Mucosa of descending colon (tissue), 3 donors: ENCODE measurements at regions of chr7 and their contacts with region 1.

Region 1: DNA sequence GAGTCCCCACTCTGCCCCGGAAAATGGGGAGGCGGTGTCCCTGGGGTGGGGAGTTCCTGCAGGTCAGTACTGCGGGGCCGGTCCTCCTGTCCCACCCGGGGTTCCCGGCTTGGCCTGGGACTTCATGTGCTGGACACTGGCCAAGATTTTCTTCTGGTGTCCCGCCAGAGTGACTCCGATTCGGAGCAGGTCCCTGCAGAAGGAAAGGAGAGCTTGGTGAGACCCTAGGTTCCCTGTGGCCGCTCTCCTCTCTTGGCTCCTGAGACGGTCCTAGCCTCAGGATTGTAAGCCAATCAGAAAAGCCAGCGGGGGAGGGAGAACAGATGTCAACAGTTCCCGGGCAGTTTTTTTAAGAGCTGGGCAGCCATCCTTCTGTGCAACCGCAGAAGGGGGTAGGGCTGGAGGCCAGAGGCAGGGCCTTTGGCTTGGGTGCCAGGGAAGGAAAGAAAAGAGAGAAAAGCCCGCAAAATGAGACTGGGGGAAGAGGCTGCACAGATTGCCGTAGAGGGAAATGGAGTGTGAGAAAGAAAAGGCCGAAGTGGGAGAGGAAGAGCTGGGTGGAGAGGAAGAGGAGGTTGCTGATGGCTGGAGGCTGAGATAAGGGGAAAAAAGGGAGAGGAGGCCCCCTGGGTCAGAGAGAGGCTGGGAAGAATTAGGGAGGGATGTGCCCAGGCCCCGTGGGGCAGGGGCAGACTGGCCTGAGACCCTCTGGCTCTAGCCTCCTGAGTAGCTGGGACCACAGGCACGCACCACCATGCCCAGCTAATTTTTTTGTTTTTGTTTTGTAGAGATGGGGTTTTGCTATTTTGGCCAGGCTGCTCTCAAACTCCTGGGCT is 23.7 kb downstream of the EPHB4 start:
- DNase-seq: peak in 2 of 3 donors; percentile 64 to 86
- ATAC-seq: peak; percentile 76
- H3K4me3 ChIP-seq: no peak overlapping the region
- H3K4me1 ChIP-seq: peaks cover 39% of the 10 kb centered on the region
- CTCF ChIP-seq: no peak

Region 2: GRCh38 chr7:100852048-100852872 is 48.6 kb after region 1 on chr7 and contains the start of gene SLC12A9:
- intact Hi-C with region 1: loop called (anchors 5 to 10 kb)
- DNase-seq: peak; percentile 94 to 95 (median 95)
- ATAC-seq: peak; percentile 99
- H3K4me3 ChIP-seq: peak within 1 kb of the TSS; percentile 34
- H3K4me1 ChIP-seq: peaks cover 17% of the 10 kb centered on the region
- CTCF ChIP-seq: peak; percentile 88
- total RNA-seq, gene SLC12A9: 27.9 to 34.0 (median 33.5) TPM